ENCODE measurements at regions of chr5 and their contacts with region 1.

Region 1: GRCh38 chr5:179060116-179061008 is at the start of gene ZNF354C:
- DNase-seq: peak; percentile 80 to 95 (median 86)
- ATAC-seq: peak; percentile 99 to 100 (median 100)
- H3K4me3 ChIP-seq: peak within 1 kb of the TSS; percentile 61 to 93 (median 85)
- H3K27ac ChIP-seq: peak within 1 kb of the TSS; percentile 6 to 63 (median 45)
- H3K4me1 ChIP-seq: peaks cover 0 to 4% (median 0%) of the 10 kb centered on the region in 3 donors
- H3K27me3 ChIP-seq: no peaks in the 10 kb centered on the region
- CTCF ChIP-seq: no peak
- total RNA-seq, gene ZNF354C: 1.4 to 4.4 (median 2.1) TPM

Region 2: DNA sequence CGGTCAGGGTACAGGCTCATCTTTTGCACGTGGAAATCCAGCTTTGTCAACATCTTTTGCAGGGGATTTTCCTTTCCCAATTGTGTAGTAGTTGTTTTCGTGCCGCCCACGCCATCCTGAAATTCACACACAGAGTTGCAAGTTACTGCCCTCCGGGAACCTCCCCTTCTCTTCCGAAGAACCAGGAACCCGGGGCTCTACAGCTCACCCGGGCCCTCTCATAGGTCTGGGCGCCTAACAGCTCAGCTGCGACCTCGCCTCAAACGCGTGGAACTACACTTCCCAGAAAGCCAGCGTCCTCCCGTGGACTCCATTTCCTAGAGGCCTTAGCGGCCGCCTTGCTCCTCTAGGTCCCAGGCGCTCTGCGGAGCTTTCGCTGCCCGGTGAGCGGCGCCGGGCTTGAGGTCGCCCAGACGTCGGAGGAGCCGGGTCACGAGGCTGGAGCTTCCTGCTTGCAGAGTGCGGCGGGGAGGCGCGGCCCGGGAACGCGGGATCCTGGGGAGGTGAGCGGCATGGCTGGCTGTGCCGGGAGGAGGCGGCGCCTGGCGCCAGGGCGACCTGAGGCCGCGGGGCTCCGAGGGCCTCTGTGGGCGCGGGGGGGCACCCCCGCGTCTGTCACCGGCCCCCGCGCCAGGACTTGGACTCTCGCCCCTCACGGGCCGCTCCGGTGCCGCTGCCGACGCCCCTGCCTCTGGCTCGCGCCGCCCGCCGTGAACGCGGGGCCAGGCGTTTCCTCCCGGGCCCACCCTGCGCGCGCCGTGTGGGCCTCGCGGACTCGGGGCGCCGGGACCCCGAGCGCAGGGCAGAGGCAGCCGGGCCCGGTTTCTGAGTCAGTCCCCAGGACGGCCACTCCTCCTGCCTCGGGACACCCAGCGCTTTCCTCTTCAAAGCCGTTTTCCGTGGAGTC is 200.5 kb before region 1 on chr5 and contains the start of gene ZNF354B:
- intact Hi-C with region 1: loop called in 1 of 3 experiments (anchors 10 kb)
- DNase-seq: peak; percentile 89 to 97 (median 91)
- ATAC-seq: peak; percentile 97 to 99 (median 98)
- H3K4me3 ChIP-seq: peak within 1 kb of the TSS; percentile 70 to 95 (median 81)
- H3K27ac ChIP-seq: peak within 1 kb of the TSS; percentile 64 to 82 (median 70)
- H3K4me1 ChIP-seq: peaks cover 0 to 8% (median 4%) of the 10 kb centered on the region in 3 donors
- H3K27me3 ChIP-seq: no peaks in the 10 kb centered on the region
- CTCF ChIP-seq: no peak
- total RNA-seq, gene ZNF354B: 4.4 to 11.8 (median 7.5) TPM